ENCODE measurements at regions of chr12 and their contacts with region 1.

Region 1: GRCh38 chr12:120199595-120200306 is 1.2 kb downstream of the RPLP0 start:
- DNase-seq: peak; percentile 35
- H3K27ac ChIP-seq: peak overlapping the region; percentile 91
- CTCF ChIP-seq: no peak

Region 2: GRCh38 chr12:119994892-119995651 is 204.7 kb before region 1 on chr12:
- CTCF ChIA-PET with region 1: no interaction called
- POLR2A ChIA-PET with region 1: no interaction called
- DNase-seq: no peak
- H3K27ac ChIP-seq: no peak overlapping the region
- CTCF ChIP-seq: no peak

Region 3: GRCh38 chr12:120116792-120117651 is 82.7 kb before region 1 on chr12:
- CTCF ChIA-PET with region 1: no interaction called
- POLR2A ChIA-PET with region 1: interaction called, 11 read pairs
- DNase-seq: peak; percentile 99
- H3K27ac ChIP-seq: peak overlapping the region; percentile 94
- CTCF ChIP-seq: no peak

Region 4: GRCh38 chr12:120168336-120168735 is 31.4 kb before region 1 on chr12:
- CTCF ChIA-PET with region 1: interaction called, 3 read pairs
- POLR2A ChIA-PET with region 1: interaction called, 11 read pairs
- DNase-seq: no peak
- H3K27ac ChIP-seq: no peak overlapping the region
- CTCF ChIP-seq: no peak

Region 5: DNA sequence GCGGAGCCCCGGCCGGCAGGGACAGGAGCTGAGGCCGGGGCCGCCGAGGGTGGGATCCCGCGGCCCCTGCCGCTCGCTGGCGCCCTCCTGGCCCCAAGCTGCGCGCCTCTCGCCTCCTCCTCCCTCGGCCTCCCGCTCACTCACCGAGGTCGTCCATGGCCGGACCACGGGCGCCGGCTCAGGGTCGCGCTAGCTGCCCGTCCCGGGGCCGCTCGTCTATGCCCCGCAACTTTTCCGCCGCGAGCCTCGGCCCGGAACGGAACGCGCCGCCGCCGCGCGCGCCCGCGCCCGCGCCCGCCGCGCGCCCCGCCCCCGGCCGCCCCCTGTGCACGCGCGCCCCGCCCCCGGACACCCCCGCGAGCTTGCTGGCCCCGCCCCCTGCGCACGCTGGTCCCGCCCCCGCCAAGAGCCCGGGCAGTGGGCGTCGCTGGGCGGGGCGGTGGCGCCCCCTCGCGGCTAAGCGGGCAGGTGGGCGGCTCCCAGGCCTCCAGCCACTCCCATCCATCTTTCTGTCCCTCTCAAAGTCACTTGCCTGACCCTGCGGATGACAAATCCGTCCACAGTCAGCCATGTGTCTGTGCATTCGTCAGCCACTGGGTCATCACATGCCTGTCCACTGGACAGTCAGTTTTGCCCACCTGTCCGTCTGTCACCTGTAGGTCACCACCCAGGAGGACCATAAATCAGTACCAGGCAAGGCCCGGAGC is 65.9 kb after region 1 on chr12 and contains the start of gene PXN:
- CTCF ChIA-PET with region 1: no interaction called
- POLR2A ChIA-PET with region 1: interaction called, 18 read pairs
- DNase-seq: peak; percentile 90
- H3K27ac ChIP-seq: peak within 1 kb of the TSS; percentile 96
- CTCF ChIP-seq: peak; percentile 93

Measured in RWPE1 (cell line).